Caco-2 (cell line): ENCODE measurements at regions of chr7 and their contacts with region 1.

Region 1: GRCh38 chr7:38908759-38909335 is at the start of gene VPS41:
- DNase-seq: peak; percentile 82 to 83
- H3K4me3 ChIP-seq: peak within 1 kb of the TSS; percentile 94
- H3K4me3 Mint-ChIP-seq: peak within 1 kb of the TSS; percentile 99
- H3K27ac Mint-ChIP-seq: peak within 1 kb of the TSS; percentile 87
- H3K4me1 ChIP-seq: peaks cover 19% of the 10 kb centered on the region; the same call in 1 of the 2 replicates
- H3K4me1 Mint-ChIP-seq: peaks cover 16% of the 10 kb centered on the region
- H3K27me3 ChIP-seq: no peaks in the 10 kb centered on the region
- H3K27me3 Mint-ChIP-seq: no peaks in the 10 kb centered on the region
- CTCF ChIP-seq: no peak
- total RNA-seq, gene VPS41: 73.9 and 86.9 TPM in 2 replicates

Region 2: GRCh38 chr7:38465956-38466355 is 442.9 kb before region 1 on chr7:
- CTCF ChIA-PET with region 1: no interaction called
- POLR2A ChIA-PET with region 1: no interaction called
- intact Hi-C with region 1: loop called (anchors 5 kb)
- DNase-seq: no peak
- H3K4me3 ChIP-seq: no peak overlapping the region
- H3K4me3 Mint-ChIP-seq: no peak overlapping the region
- H3K27ac Mint-ChIP-seq: no peak overlapping the region
- H3K4me1 ChIP-seq: no peaks in the 10 kb centered on the region
- H3K4me1 Mint-ChIP-seq: no peaks in the 10 kb centered on the region
- H3K27me3 ChIP-seq: no peaks in the 10 kb centered on the region
- H3K27me3 Mint-ChIP-seq: peaks cover 10% of the 10 kb centered on the region
- CTCF ChIP-seq: no peak